Sciatic nerve (tissue), 2 donors: ENCODE measurements at regions of chr22 and their contacts with region 1.

Region 1: GRCh38 chr22:23168111-23169042 is 11.9 kb upstream of the BCR start:
- DNase-seq: no peak
- ATAC-seq: no peak

Region 2: DNA sequence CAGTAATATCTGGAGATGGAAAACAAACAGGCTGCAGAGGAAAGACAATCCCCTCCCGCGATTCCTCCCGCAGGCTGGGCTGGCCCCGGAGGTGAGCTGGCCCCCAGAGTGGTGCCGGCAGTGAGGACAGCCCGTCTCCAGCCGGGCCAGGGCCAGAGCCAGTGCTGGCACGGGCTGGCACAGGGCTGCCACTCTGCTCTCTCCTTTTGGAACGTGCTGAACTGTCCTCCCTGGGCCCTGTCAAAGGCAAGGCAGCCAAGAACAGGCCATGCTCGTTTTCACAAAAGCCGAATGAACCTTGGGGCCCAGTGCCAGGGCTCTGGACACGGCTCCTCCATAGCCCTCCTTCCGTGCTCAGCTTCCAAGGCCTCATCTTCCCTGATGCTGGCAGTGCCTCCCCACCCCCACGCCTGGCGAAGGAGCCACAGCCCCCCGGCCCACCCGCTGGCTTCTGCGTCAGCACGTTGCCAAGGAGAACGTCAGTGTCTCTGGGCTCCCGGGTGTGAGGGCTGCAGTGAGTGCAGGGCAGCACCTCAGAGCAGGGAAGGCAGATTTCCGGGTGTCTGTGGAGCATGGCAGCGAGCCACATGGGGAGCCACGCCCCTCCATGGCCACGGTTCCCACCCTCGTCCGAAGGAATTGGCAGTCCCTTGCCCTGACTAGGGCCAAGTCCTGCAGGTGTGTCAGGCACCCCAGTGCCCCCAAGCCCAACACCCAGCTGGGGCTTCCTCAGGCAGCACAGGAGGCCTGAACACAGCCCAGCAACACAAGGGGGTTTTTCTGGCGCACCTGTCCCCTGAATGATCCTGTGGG is 69.5 kb before region 1 on chr22:
- intact Hi-C with region 1: no loop called
- DNase-seq: peak; percentile 72
- ATAC-seq: peak; percentile 71

Region 3: GRCh38 chr22:23113067-23113846 is 55.1 kb before region 1 on chr22:
- intact Hi-C with region 1: no loop called
- DNase-seq: peak; percentile 70
- ATAC-seq: peak; percentile 34

Region 4: GRCh38 chr22:23281406-23282088 is 113.2 kb after region 1 on chr22:
- intact Hi-C with region 1: loop called (anchors 2 kb)
- DNase-seq: peak; percentile 95
- ATAC-seq: peak; percentile 78